PC-3 (cell line): ENCODE measurements at regions of chr1 and their contacts with region 1.

Region 1: DNA sequence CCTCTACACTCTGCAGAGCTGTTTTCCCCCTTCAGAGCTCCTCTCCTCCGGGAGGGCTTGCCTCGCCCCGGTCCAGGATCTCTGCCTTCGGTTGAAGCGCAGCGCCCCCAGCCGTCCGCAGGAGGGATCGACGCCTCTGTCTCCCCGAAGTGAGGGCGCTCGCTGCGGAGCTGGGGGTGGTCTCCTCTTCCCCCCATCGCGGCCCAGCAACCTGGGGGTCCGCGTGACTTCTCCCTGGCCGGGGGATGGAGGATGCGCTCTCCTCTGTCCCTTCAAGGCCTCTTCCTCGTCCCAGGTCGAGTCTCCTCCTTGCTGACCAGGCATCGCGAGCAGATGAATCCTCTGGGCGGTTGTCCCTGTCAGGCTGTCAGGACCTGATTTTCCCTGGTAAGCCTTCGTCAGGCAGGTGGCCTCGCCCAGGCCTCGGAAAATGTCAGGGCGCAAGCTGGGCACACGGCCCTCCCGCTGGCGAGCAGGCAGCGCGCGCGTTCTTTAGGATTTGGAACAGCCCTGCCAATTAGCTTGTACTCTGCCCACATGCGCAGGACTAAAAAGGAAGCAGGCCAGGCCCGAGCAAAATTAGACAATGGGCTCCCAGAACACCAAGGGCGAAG is 90.5 kb downstream of the EDEM3 start:
- DNase-seq: peak; percentile 69
- ATAC-seq: peak; percentile 92
- H3K4me3 ChIP-seq: peak overlapping the region; percentile 65
- H3K27ac ChIP-seq: no peak overlapping the region
- H3K4me1 ChIP-seq: no peaks in the 10 kb centered on the region
- H3K27me3 ChIP-seq: no peaks in the 10 kb centered on the region
- CTCF ChIP-seq: peak; percentile 85

Region 2: GRCh38 chr1:184075055-184076029 is 588.8 kb before region 1 on chr1:
- CTCF ChIA-PET with region 1: no interaction called
- POLR2A ChIA-PET with region 1: interaction called, 4 read pairs
- intact Hi-C with region 1: loop called (anchors 2 kb)
- DNase-seq: peak; percentile 70
- ATAC-seq: peak; percentile 67
- H3K4me3 ChIP-seq: no peak overlapping the region
- H3K27ac ChIP-seq: no peak overlapping the region
- H3K4me1 ChIP-seq: no peaks in the 10 kb centered on the region
- H3K27me3 ChIP-seq: no peaks in the 10 kb centered on the region
- CTCF ChIP-seq: peak; percentile 70

Region 3: GRCh38 chr1:184242507-184242943 is 421.6 kb before region 1 on chr1:
- CTCF ChIA-PET with region 1: interaction called, 5 read pairs
- POLR2A ChIA-PET with region 1: no interaction called
- intact Hi-C with region 1: loop called (anchors 10 kb)
- DNase-seq: peak; percentile 62
- ATAC-seq: peak; percentile 96
- H3K4me3 ChIP-seq: no peak overlapping the region
- H3K27ac ChIP-seq: peak overlapping the region; percentile 27
- H3K4me1 ChIP-seq: peaks cover 14% of the 10 kb centered on the region
- H3K27me3 ChIP-seq: no peaks in the 10 kb centered on the region
- CTCF ChIP-seq: 0 out of 2 replicates have a peak, but pooled peaks have one; percentile 22

Region 4: DNA sequence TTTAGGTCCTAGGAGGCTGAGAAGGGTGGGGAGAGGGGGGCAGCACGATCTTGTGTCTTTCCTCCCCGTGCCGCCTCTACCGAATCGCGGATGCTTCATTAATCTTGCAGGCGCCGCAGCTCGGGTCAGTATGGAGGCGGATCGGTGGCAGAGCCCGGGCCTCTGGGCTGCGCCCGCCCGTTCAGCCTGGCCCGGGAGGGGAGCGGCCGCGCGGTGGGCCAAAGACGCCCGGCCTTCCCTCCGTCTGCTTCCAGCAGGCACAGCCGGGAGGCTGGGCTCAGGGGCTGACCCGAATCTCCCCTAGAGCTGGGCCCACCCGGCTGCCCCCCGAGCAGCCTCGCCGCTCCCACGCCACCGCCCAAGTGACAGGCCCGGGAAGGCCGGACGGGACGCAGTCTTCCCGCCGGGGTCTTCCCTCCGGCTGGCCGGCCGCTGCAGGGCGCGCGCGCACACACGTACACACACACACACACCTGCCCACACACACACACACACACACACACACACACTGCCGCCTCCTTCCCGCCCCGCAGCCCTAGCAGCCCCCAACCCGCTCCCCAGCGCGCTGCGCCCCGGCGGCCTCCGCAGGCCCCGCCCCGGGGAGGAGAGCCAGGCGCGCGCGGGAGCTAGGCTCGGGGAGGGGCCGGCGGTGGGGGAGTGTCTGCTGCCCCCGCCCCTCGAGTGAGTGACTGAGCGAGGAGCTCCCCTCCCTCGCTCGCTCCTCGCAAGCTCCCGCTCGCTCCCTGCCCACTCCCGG is 277.7 kb before region 1 on chr1 and contains the start of gene C1orf21:
- CTCF ChIA-PET with region 1: no interaction called
- POLR2A ChIA-PET with region 1: no interaction called
- intact Hi-C with region 1: loop called (anchors 5 kb)
- DNase-seq: peak; percentile 73
- ATAC-seq: peak; percentile 78
- H3K4me3 ChIP-seq: peak within 1 kb of the TSS; percentile 90
- H3K27ac ChIP-seq: no peak within 1 kb of the TSS
- H3K4me1 ChIP-seq: peaks cover 10% of the 10 kb centered on the region; the same call in 1 of the 2 replicates
- H3K27me3 ChIP-seq: no peaks in the 10 kb centered on the region
- CTCF ChIP-seq: no peak
- total RNA-seq, gene C1orf21: 1.3 and 7.3 TPM in 2 replicates

Region 5: DNA sequence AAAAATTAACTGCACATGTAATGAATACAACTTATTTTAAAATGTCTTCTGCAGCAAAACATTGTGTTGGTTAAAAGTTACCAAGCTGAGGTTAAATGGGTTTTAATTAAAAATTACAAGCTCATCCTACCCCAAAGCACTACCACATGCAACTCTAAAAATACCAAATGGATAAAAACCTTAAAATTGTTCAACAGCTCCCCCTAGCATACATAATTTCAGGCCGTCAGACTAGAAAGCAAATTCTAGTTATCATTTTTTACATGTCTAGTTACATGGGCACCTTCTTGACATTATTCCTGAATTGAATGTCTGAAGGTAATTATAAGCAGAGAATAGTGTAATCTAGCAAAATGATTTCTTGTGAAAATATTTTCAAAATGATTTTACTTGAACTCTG is 100.8 kb before region 1 on chr1:
- CTCF ChIA-PET with region 1: interaction called, 4 read pairs
- POLR2A ChIA-PET with region 1: no interaction called
- intact Hi-C with region 1: loop called (anchors 10 kb)
- DNase-seq: peak; percentile 47
- ATAC-seq: no peak
- H3K4me3 ChIP-seq: no peak overlapping the region
- H3K27ac ChIP-seq: no peak overlapping the region
- H3K4me1 ChIP-seq: no peaks in the 10 kb centered on the region
- H3K27me3 ChIP-seq: no peaks in the 10 kb centered on the region
- CTCF ChIP-seq: peak; percentile 68

Region 6: GRCh38 chr1:184590163-184590750 is 73.9 kb before region 1 on chr1:
- CTCF ChIA-PET with region 1: no interaction called
- POLR2A ChIA-PET with region 1: no interaction called
- intact Hi-C with region 1: loop called (anchors 5 kb)
- DNase-seq: peak; percentile 83
- ATAC-seq: peak; percentile 33
- H3K4me3 ChIP-seq: peak overlapping the region; percentile 41; the same call in 1 of the 2 replicates
- H3K27ac ChIP-seq: peak overlapping the region; percentile 87
- H3K4me1 ChIP-seq: peaks cover 45% of the 10 kb centered on the region
- H3K27me3 ChIP-seq: no peaks in the 10 kb centered on the region
- CTCF ChIP-seq: no peak